Psoas muscle (tissue), 8 donors: ENCODE measurements at regions of chr11 and their contacts with region 1.

Region 1: GRCh38 chr11:17077520-17078401 is at the start of gene RPS13:
- DNase-seq: peak; percentile 96 to 98
- ATAC-seq: peak; percentile 96 to 99 (median 98)
- H3K4me3 ChIP-seq: peak within 1 kb of the TSS; percentile 91
- H3K27ac ChIP-seq: peak within 1 kb of the TSS; percentile 96
- H3K4me1 ChIP-seq: peaks cover 19% of the 10 kb centered on the region
- H3K27me3 ChIP-seq: no peaks in the 10 kb centered on the region
- CTCF ChIP-seq: no peak
- total RNA-seq, gene RPS13: 717 to 1,079 (median 1,007) TPM

Region 2: DNA sequence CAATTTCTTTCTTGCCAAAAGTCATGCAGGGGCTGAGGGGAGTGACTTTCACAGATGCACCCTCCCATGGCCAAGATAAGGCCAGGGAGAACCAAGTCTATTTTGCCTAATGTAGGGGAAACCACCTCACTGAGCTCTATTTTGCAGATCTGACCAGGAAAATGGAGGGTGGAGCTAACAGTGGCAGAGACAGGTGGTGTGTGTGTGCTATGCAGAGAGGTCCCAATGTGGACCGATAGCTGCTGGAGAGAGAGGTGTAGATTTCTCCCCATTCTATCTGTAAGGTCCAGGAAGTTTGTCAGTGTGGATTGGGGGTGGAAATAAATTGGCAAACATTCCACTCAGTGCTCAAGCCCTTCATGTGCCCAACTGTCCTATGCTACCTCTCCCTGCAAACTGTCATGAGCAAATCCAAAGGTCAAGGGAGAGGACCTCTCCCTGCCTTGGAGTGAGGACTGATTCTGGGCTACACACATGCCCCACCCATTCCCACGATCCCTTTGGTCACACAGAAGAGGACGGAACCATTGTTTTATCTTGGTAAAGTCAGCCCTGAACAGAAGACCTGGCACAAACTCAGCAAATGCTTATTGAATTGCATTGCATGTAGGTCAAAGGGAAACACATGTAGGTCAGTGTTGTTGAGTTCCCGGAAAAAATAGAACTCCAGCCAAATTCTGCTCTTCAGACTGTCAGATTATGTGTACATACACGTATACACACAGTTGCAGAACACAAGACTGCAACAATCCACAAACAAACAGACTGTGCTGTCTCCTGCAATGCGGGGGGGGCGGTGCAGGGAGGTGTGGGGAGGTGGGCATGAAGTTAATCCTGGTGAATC is 273.4 kb before region 1 on chr11:
- intact Hi-C with region 1: no loop called
- DNase-seq: no peak
- ATAC-seq: peak; percentile 26 to 55 (median 52)
- H3K4me3 ChIP-seq: no peak overlapping the region
- H3K27ac ChIP-seq: no peak overlapping the region
- H3K4me1 ChIP-seq: peaks cover 16% of the 10 kb centered on the region
- H3K27me3 ChIP-seq: no peaks in the 10 kb centered on the region
- CTCF ChIP-seq: no peak

Region 3: GRCh38 chr11:16945671-16946469 is 131.9 kb before region 1 on chr11:
- intact Hi-C with region 1: loop called in 1 of 2 experiments (anchors 5 kb)
- DNase-seq: no peak
- ATAC-seq: peak; percentile 76 to 89 (median 82)
- H3K4me3 ChIP-seq: no peak overlapping the region
- H3K27ac ChIP-seq: no peak overlapping the region
- H3K4me1 ChIP-seq: no peaks in the 10 kb centered on the region
- H3K27me3 ChIP-seq: no peaks in the 10 kb centered on the region
- CTCF ChIP-seq: peak; percentile 77

Region 4: GRCh38 chr11:17063171-17064002 is 14.4 kb before region 1 on chr11:
- intact Hi-C with region 1: no loop called
- DNase-seq: peak; percentile 42 to 74
- ATAC-seq: peak; percentile 75 to 94 (median 86)
- H3K4me3 ChIP-seq: no peak overlapping the region
- H3K27ac ChIP-seq: no peak overlapping the region
- H3K4me1 ChIP-seq: no peaks in the 10 kb centered on the region
- H3K27me3 ChIP-seq: no peaks in the 10 kb centered on the region
- CTCF ChIP-seq: peak; percentile 79

Region 5: DNA sequence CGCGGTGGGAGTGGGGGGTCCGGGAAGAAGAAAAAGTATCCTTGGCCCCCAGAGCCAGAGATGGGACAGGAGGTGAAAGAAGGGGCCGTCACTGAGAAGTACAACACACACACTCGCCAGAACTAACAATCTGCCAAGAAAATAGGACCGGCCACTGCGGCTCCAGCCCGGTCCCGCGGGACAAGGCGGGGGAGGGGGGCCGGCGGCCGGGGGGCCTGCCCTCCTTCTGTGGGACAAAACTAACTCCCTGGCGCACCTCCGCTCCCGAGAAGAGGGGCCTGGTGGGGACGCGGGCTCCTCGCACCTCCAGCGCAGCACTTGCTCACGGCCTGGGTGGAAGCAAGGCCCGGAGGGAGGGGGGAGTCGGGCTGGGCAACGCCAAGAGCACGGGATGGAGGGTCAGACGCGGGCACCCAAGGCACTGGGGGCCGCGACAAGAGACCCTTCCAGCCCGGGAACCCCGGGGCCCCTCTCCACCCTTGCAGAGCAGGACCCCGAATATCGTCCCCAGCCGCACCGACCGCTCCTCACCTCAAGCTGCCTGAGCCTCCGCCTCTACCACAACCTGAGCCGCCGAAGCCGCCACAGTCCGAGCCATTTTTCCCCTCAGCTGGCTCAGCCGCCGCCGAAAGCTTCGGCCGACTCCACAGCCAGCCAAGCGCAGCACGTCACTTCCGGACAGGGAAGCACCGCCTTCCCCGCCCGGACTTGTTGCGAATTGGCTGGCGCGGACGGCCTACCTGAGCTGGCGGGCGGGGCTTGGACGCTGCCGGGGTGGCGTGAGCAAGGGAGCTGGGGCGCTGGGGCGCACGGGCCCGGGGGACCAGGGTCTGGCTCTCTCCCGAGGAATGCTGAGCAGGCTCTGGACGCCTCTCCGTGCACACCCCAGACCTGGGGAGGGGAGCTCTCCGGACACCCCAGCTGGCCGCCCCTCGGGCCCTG is 129.8 kb after region 1 on chr11 and contains the start of gene PIK3C2A:
- intact Hi-C with region 1: loop called in 1 of 2 experiments (anchors 5 kb)
- DNase-seq: peak; percentile 96 to 97
- ATAC-seq: peak; percentile 98 to 99 (median 99)
- H3K4me3 ChIP-seq: peak within 1 kb of the TSS; percentile 78
- H3K27ac ChIP-seq: peak within 1 kb of the TSS; percentile 88
- H3K4me1 ChIP-seq: peaks cover 7% of the 10 kb centered on the region
- H3K27me3 ChIP-seq: no peaks in the 10 kb centered on the region
- CTCF ChIP-seq: no peak
- total RNA-seq, gene PIK3C2A: 14.0 to 16.6 (median 16.4) TPM